GM23248 (cell line): ENCODE measurements at regions of chr10 and their contacts with region 1.

Region 1: GRCh38 chr10:93482145-93482834 is at the start of gene MYOF:
- DNase-seq: peak; percentile 94
- H3K4me3 ChIP-seq: peak within 1 kb of the TSS; percentile 88
- H3K27ac ChIP-seq: peak within 1 kb of the TSS; percentile 98
- H3K4me1 ChIP-seq: peaks cover 20% of the 10 kb centered on the region; the same call in 1 of the 2 replicates
- H3K27me3 ChIP-seq: no peaks in the 10 kb centered on the region
- total RNA-seq, gene MYOF: 256 and 261 TPM in 2 replicates

Region 2: GRCh38 chr10:93376372-93377293 is 105.7 kb before region 1 on chr10:
- in situ Hi-C with region 1: loop called (anchors 10 kb)
- DNase-seq: peak; percentile 92
- H3K4me3 ChIP-seq: peak overlapping the region; percentile 41
- H3K27ac ChIP-seq: peak overlapping the region; percentile 95
- H3K4me1 ChIP-seq: peaks cover 52% of the 10 kb centered on the region
- H3K27me3 ChIP-seq: no peaks in the 10 kb centered on the region